OCI-LY7 (cell line): ENCODE measurements at regions of chr18 and their contacts with region 1.

Region 1: GRCh38 chr18:9117980-9118841 is 15.7 kb downstream of the NDUFV2 start:
- DNase-seq: no peak
- H3K4me3 ChIP-seq: peak overlapping the region; percentile 6
- H3K27ac ChIP-seq: peak overlapping the region; percentile 34
- H3K4me1 ChIP-seq: peaks cover 34% of the 10 kb centered on the region
- CTCF ChIP-seq: no peak

Region 2: DNA sequence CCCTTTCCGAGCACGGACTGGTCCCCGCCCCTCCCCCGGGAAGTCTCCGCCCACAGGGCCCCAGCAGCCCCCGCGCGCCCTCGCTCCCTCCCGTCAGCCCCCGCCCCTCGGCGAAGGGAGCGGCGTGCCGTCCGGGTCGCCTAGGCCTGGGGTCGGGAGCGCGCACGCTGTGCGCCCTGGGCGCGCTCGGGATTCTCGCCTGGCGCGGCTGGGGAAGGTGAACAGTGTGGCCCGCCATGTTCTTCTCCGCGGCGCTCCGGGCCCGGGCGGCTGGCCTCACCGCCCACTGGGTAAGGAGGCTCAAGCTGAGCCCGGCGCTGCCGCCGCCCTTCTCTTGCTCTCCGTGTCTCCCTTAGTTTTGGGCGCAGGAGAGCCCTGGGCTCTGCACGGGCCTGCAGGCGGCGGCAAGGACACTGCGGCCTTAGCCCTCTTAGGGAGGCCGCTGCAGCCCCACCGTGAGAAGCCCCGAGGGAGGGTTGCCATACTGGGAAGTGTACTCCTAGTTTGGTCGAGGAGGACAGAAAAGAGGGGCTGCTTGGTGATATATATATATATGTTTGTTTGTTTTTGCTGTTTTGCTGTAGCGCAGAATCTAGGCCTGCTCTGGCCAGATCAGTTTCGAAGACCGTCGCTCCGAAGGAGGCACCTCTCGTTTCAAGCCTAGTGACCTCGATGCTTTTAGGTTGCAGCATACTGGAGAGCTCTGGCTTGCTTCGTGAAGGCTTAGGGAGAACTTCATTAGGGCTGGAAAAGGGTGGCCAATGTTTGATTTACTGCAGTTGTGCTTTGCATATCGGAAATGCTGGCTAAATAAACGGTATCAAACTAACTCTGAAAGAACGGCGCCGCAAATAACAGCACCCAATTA is 15.5 kb before region 1 on chr18 and contains the start of gene NDUFV2:
- CTCF ChIA-PET with region 1: interaction called, 3 read pairs
- POLR2A ChIA-PET with region 1: interaction called, 25 read pairs
- intact Hi-C with region 1: no loop called
- DNase-seq: peak; percentile 97
- H3K4me3 ChIP-seq: peak within 1 kb of the TSS; percentile 93
- H3K27ac ChIP-seq: peak within 1 kb of the TSS; percentile 75
- H3K4me1 ChIP-seq: peaks cover 41% of the 10 kb centered on the region
- CTCF ChIP-seq: no peak
- total RNA-seq, gene NDUFV2: 145 and 185 TPM in 2 replicates